CD4-positive, alpha-beta memory T cell (primary cell): ENCODE measurements at regions of chr6 and their contacts with region 1.

Region 1: GRCh38 chr6:26285143-26286134 is 79.6 kb upstream of the BTN3A2 start:
- DNase-seq: peak; percentile 91 to 98 (median 95)
- H3K4me3 ChIP-seq: peak overlapping the region; percentile 51 to 75
- H3K4me3 Mint-ChIP-seq: peak overlapping the region; percentile 83 to 95 (median 91)
- H3K27ac ChIP-seq: peak overlapping the region; percentile 81
- H3K27ac Mint-ChIP-seq: peak overlapping the region; percentile 95 to 99 (median 99)
- H3K4me1 ChIP-seq: peaks cover 13% of the 10 kb centered on the region
- H3K4me1 Mint-ChIP-seq: peaks cover 8 to 34% (median 19%) of the 10 kb centered on the region in 4 donors
- H3K27me3 ChIP-seq: no peaks in the 10 kb centered on the region
- H3K27me3 Mint-ChIP-seq: peaks cover 2 to 9% of the 10 kb centered on the region in 2 donors

Region 2: DNA sequence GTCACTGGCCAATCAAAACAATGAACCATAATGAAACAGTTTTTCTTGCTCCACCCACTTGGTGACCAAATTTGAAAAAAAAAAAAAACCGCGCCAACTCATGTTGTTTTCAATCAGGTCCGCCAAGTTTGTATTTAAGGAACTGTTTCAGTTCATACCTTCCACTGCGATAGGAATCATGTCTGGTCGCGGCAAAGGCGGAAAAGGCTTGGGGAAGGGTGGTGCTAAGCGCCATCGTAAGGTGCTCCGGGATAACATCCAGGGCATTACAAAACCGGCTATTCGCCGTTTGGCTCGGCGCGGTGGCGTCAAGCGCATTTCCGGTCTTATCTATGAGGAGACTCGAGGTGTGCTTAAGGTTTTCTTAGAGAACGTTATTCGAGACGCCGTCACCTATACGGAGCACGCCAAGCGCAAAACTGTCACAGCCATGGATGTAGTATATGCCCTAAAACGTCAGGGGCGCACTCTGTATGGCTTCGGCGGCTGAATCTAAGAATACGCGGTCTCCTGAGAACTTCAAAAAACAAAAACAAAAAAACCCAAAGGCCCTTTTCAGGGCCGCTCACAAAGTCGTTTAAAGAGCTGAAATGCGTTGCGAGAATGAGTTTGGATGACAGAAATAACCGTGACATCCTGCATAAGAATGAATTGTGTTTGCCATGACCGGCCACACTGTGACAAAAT is 181.5 kb before region 1 on chr6:
- CTCF ChIA-PET with region 1: no interaction called
- POLR2A ChIA-PET with region 1: interaction called, 5 read pairs
- intact Hi-C with region 1: loop called (anchors 5 kb)
- DNase-seq: peak; percentile 93 to 96 (median 94)
- H3K4me3 ChIP-seq: peak overlapping the region; percentile 36 to 39
- H3K4me3 Mint-ChIP-seq: peak overlapping the region; percentile 84 to 96 (median 92)
- H3K27ac ChIP-seq: peak overlapping the region; percentile 66
- H3K27ac Mint-ChIP-seq: peak overlapping the region; percentile 96 to 100 (median 99)
- H3K4me1 ChIP-seq: peaks cover 17% of the 10 kb centered on the region
- H3K4me1 Mint-ChIP-seq: peaks cover 11 to 19% (median 15%) of the 10 kb centered on the region in 4 donors
- H3K27me3 ChIP-seq: no peaks in the 10 kb centered on the region
- H3K27me3 Mint-ChIP-seq: peaks cover 2 to 6% of the 10 kb centered on the region in 2 donors

Region 3: DNA sequence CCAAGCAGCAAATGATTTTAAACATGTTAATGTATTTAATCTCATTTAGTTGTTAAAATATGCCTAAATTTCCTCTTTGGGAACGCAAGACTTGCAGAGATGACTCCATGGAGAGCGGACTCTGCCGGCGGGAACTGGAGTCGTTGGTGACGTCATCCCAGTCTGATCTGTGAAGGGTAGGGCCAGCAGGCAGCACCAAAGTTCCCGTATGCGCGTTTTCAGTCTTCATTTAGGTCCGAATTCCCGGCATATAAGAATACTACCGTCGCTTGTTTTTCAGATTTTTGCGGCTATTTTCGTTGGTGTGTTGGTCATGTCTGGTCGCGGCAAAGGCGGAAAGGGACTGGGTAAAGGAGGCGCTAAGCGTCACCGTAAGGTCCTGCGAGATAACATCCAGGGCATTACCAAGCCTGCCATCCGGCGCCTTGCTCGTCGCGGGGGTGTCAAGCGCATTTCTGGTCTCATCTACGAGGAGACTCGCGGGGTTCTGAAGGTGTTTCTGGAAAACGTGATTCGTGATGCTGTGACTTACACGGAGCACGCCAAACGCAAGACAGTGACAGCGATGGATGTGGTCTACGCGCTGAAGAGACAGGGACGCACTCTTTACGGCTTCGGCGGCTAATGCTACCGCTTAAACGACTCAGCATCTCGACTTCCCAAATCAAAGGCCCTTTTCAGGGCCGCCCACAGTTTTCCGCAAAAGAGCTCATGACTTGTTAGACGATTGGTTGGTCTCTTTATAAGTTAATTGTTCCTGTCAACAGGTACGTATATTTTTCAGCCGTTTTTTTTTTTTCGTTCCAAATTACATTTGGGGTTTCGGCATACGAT is 80.9 kb before region 1 on chr6:
- CTCF ChIA-PET with region 1: interaction called, 4 read pairs
- POLR2A ChIA-PET with region 1: interaction called, 215 read pairs
- intact Hi-C with region 1: loop called (anchors 1 kb)
- DNase-seq: peak; percentile 85 to 95 (median 89)
- H3K4me3 ChIP-seq: peak overlapping the region; percentile 48 to 87
- H3K4me3 Mint-ChIP-seq: no peak overlapping the region
- H3K27ac ChIP-seq: peak overlapping the region; percentile 82
- H3K27ac Mint-ChIP-seq: no peak overlapping the region
- H3K4me1 ChIP-seq: peaks cover 39% of the 10 kb centered on the region
- H3K4me1 Mint-ChIP-seq: peaks cover 8 to 26% (median 13%) of the 10 kb centered on the region in 4 donors
- H3K27me3 ChIP-seq: no peaks in the 10 kb centered on the region
- H3K27me3 Mint-ChIP-seq: peaks cover 0 to 3% of the 10 kb centered on the region in 2 donors

Region 4: DNA sequence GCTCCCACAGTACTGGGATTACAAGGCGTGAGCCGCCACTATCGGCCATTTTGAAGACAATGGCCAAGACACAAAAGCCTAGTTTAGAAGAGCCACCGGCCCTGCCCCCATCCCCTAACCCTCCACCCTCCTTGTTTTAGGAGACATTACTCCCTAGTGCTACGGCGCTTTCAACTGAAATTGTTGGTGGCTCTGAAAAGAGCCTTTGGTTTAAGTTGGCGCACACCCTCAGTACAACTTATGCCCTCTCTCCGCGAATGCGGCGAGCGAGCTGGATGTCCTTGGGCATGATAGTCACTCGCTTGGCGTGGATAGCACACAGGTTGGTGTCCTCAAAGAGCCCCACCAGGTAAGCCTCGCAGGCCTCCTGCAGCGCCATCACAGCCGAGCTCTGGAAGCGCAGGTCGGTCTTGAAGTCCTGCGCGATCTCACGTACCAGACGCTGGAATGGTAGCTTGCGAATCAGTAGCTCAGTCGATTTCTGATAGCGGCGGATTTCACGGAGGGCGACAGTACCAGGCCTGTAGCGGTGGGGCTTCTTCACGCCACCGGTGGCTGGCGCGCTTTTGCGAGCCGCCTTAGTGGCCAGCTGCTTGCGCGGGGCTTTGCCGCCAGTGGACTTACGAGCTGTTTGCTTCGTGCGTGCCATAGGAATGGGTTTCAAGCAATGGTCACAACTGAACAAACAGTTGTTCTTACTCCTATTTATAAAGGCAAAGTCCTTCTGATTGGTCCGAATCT is 35.3 kb before region 1 on chr6:
- CTCF ChIA-PET with region 1: interaction called, 25 read pairs
- POLR2A ChIA-PET with region 1: interaction called, 3 read pairs
- intact Hi-C with region 1: loop called (anchors 1 kb)
- DNase-seq: peak; percentile 79 to 88 (median 83)
- H3K4me3 ChIP-seq: peak overlapping the region; percentile 86 to 88
- H3K4me3 Mint-ChIP-seq: peak overlapping the region; percentile 92 to 99 (median 98)
- H3K27ac ChIP-seq: peak overlapping the region; percentile 59
- H3K27ac Mint-ChIP-seq: peak overlapping the region; percentile 85 to 97 (median 94)
- H3K4me1 ChIP-seq: peaks cover 25% of the 10 kb centered on the region
- H3K4me1 Mint-ChIP-seq: peaks cover 28 to 53% (median 40%) of the 10 kb centered on the region in 4 donors
- H3K27me3 ChIP-seq: no peaks in the 10 kb centered on the region
- H3K27me3 Mint-ChIP-seq: no peaks in the 10 kb centered on the region

Region 5: DNA sequence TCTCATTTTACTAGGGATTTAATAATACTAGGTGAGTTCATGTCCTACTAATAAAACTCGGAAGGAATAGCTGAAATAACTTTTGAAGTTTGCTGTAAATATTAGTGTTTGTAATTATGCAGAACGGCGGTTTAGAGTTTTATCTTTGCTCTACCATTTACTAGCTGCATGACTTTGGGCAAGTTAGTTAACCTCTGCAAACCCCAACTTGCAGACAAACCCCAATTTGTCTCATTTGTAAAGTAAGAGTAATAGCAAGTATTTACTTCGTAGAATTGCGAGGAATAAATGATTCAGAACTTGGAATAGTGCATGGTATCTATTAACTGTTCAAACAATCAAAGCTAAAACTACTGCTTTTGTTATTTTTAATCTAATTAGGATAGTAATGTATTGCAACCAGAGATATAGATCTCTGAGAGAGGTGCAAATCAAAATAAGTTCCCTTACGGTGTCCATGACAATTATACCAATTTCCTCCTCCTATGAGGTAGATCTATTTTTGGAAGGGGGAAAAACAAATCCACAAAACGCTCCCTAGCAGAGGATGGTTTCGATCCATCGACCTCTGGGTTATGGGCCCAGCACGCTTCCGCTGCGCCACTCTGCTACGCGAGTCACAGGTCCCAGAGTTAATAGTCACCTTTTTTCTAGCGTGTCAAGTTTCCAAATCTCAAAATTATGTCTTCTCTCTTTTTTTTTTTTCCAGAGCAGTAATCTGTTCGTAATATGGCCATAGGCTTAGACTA is 44.5 kb after region 1 on chr6:
- CTCF ChIA-PET with region 1: no interaction called
- POLR2A ChIA-PET with region 1: interaction called, 10 read pairs
- intact Hi-C with region 1: loop called (anchors 2 kb)
- DNase-seq: peak; percentile 51 to 66 (median 62)
- H3K4me3 ChIP-seq: no peak overlapping the region
- H3K4me3 Mint-ChIP-seq: peak overlapping the region; percentile 63 to 86 (median 82)
- H3K27ac ChIP-seq: no peak overlapping the region
- H3K27ac Mint-ChIP-seq: peak overlapping the region; percentile 42 to 98 (median 93)
- H3K4me1 ChIP-seq: peaks cover 32% of the 10 kb centered on the region
- H3K4me1 Mint-ChIP-seq: peaks cover 29 to 43% (median 32%) of the 10 kb centered on the region in 4 donors
- H3K27me3 ChIP-seq: peaks cover 7% of the 10 kb centered on the region
- H3K27me3 Mint-ChIP-seq: peaks cover 15 to 38% of the 10 kb centered on the region in 2 donors

Region 6: GRCh38 chr6:26629359-26629758 is 343.9 kb after region 1 on chr6:
- CTCF ChIA-PET with region 1: no interaction called
- POLR2A ChIA-PET with region 1: no interaction called
- intact Hi-C with region 1: no loop called
- DNase-seq: no peak
- H3K4me3 ChIP-seq: no peak overlapping the region
- H3K4me3 Mint-ChIP-seq: no peak overlapping the region
- H3K27ac ChIP-seq: no peak overlapping the region
- H3K27ac Mint-ChIP-seq: no peak overlapping the region
- H3K4me1 ChIP-seq: no peaks in the 10 kb centered on the region
- H3K4me1 Mint-ChIP-seq: no peaks in the 10 kb centered on the region
- H3K27me3 ChIP-seq: no peaks in the 10 kb centered on the region
- H3K27me3 Mint-ChIP-seq: peaks cover 0 to 4% of the 10 kb centered on the region in 2 donors

Region 7: DNA sequence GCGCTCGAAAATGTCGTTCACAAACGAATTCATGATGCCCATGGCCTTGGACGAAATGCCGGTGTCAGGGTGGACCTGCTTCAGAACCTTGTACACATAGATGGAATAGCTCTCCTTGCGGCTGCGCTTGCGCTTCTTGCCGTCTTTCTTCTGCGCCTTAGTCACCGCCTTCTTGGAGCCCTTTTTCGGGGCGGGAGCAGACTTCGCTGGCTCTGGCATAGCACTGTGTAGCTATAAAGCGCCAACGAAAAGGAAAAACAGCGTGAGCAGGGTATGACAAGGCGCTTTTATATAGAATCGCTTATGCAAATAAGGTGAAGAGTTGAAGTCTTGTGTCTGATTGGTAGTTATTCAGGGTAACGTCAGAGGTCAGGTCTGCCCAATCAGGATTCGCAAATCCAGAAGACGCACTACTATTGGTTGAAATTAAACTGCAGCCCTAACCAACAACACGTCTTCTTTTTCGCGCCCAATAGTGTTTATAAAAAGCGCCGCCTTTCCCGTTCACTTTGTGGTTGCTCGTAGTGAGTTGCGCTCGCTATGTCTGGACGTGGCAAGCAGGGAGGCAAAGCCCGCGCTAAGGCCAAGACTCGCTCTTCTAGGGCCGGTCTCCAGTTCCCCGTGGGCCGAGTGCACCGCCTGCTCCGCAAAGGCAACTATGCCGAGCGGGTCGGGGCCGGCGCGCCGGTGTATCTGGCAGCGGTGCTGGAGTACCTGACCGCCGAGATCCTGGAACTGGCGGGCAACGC is 847.3 kb after region 1 on chr6:
- CTCF ChIA-PET with region 1: no interaction called
- POLR2A ChIA-PET with region 1: interaction called, 15 read pairs
- intact Hi-C with region 1: loop called (anchors 1 kb)
- DNase-seq: peak; percentile 96 to 99 (median 98)
- H3K4me3 ChIP-seq: peak overlapping the region; percentile 72 to 90
- H3K4me3 Mint-ChIP-seq: no peak overlapping the region
- H3K27ac ChIP-seq: peak overlapping the region; percentile 93
- H3K27ac Mint-ChIP-seq: no peak overlapping the region
- H3K4me1 ChIP-seq: peaks cover 27% of the 10 kb centered on the region
- H3K4me1 Mint-ChIP-seq: peaks cover 0 to 24% (median 10%) of the 10 kb centered on the region in 4 donors
- H3K27me3 ChIP-seq: no peaks in the 10 kb centered on the region
- H3K27me3 Mint-ChIP-seq: no peaks in the 10 kb centered on the region

Region 8: GRCh38 chr6:27777614-27778355 is 1492.3 kb after region 1 on chr6:
- CTCF ChIA-PET with region 1: no interaction called
- POLR2A ChIA-PET with region 1: no interaction called
- intact Hi-C with region 1: no loop called
- DNase-seq: no peak
- H3K4me3 ChIP-seq: no peak overlapping the region
- H3K4me3 Mint-ChIP-seq: no peak overlapping the region
- H3K27ac ChIP-seq: no peak overlapping the region
- H3K27ac Mint-ChIP-seq: no peak overlapping the region
- H3K4me1 ChIP-seq: peaks cover 1% of the 10 kb centered on the region
- H3K4me1 Mint-ChIP-seq: peaks cover 0 to 6% (median 3%) of the 10 kb centered on the region in 4 donors
- H3K27me3 ChIP-seq: peaks cover 5% of the 10 kb centered on the region
- H3K27me3 Mint-ChIP-seq: peaks cover 14 to 24% of the 10 kb centered on the region in 2 donors